BJ (cell line): ENCODE measurements at regions of chr5 and their contacts with region 1.

Region 1: DNA sequence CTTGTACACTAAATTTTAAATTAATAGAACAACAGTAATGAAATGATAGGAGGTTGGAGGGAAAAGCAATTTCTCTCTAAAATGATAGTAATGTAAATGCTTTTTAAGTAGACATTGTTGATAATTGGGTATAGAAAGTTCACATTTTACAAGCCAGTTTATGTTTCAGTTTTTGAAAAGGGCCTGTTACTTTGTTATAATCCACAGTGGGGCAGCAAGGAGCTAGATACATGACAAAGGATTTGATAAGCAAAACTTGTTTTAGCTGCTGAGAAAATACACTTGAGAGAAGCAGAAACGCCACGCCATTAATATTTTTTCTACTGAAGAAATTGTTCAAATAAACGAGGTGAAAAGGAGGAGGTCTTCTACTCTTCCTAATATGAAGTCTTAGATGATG is 30.2 kb downstream of the SREK1 start:
- DNase-seq: no peak
- H3K4me3 ChIP-seq: no peak overlapping the region
- H3K27me3 ChIP-seq: no peaks in the 10 kb centered on the region
- CTCF ChIP-seq: peak; percentile 48

Region 2: DNA sequence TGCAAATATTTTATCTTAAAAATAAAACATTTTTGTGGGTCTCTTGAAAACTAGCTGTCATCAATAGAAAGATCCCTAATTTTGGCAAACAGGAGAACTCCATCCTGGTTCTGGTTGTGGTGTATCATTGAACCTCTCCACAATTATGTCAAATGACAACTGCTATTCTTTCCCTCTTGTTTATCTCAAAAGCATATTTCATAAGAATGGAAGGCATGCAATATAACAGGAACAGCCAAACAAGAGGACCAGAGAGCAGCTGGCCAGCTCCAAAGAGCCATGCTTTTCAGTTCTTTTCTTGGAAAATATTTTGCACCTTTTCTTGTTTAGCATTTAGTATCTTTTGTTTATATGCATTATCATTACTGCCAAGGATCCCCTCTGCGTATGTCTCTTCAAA is 818.1 kb before region 1 on chr5:
- CTCF ChIA-PET with region 1: no interaction called
- POLR2A ChIA-PET with region 1: no interaction called
- DNase-seq: no peak
- H3K4me3 ChIP-seq: no peak overlapping the region
- H3K27me3 ChIP-seq: no peaks in the 10 kb centered on the region
- CTCF ChIP-seq: no peak

Region 3: GRCh38 chr5:65730910-65731309 is 443.4 kb before region 1 on chr5:
- CTCF ChIA-PET with region 1: no interaction called
- POLR2A ChIA-PET with region 1: no interaction called
- DNase-seq: no peak
- H3K4me3 ChIP-seq: no peak overlapping the region
- H3K27me3 ChIP-seq: no peaks in the 10 kb centered on the region
- CTCF ChIP-seq: no peak

Region 4: GRCh38 chr5:65927497-65928321 is 246.6 kb before region 1 on chr5:
- CTCF ChIA-PET with region 1: no interaction called
- POLR2A ChIA-PET with region 1: no interaction called
- DNase-seq: no peak
- H3K4me3 ChIP-seq: peak overlapping the region; percentile 62
- H3K27me3 ChIP-seq: no peaks in the 10 kb centered on the region
- CTCF ChIP-seq: no peak

Region 5: GRCh38 chr5:66164044-66164790 is 10.1 kb before region 1 on chr5:
- CTCF ChIA-PET with region 1: interaction called, 10 read pairs
- POLR2A ChIA-PET with region 1: no interaction called
- DNase-seq: peak; percentile 63
- H3K4me3 ChIP-seq: no peak overlapping the region
- H3K27me3 ChIP-seq: no peaks in the 10 kb centered on the region
- CTCF ChIP-seq: no peak